ENCODE measurements at regions of chrX and their contacts with region 1.

Region 1: GRCh38 chrX:137051978-137052642 is 18.3 kb upstream of the GPR101 start:
- DNase-seq: peak; percentile 68
- ATAC-seq: peak; percentile 98
- H3K4me3 Mint-ChIP-seq: peak overlapping the region; percentile 87
- H3K27ac Mint-ChIP-seq: no peak overlapping the region
- H3K4me1 Mint-ChIP-seq: peaks cover 11% of the 10 kb centered on the region
- H3K27me3 Mint-ChIP-seq: peaks cover 16% of the 10 kb centered on the region
- CTCF ChIP-seq: no peak

Region 2: GRCh38 chrX:136608295-136609171 is 443.6 kb before region 1 on chrX:
- CTCF ChIA-PET with region 1: no interaction called
- POLR2A ChIA-PET with region 1: no interaction called
- intact Hi-C with region 1: loop called (anchors 1 kb)
- DNase-seq: peak; percentile 16
- ATAC-seq: peak; percentile 60
- H3K4me3 Mint-ChIP-seq: no peak overlapping the region
- H3K27ac Mint-ChIP-seq: no peak overlapping the region
- H3K4me1 Mint-ChIP-seq: peaks cover 5% of the 10 kb centered on the region
- H3K27me3 Mint-ChIP-seq: no peaks in the 10 kb centered on the region
- CTCF ChIP-seq: no peak

Region 3: GRCh38 chrX:136954930-136955329 is 97.2 kb before region 1 on chrX:
- CTCF ChIA-PET with region 1: interaction called, 5 read pairs
- POLR2A ChIA-PET with region 1: no interaction called
- intact Hi-C with region 1: loop called (anchors 1 kb)
- DNase-seq: no peak
- ATAC-seq: no peak
- H3K4me3 Mint-ChIP-seq: no peak overlapping the region
- H3K27ac Mint-ChIP-seq: no peak overlapping the region
- H3K4me1 Mint-ChIP-seq: no peaks in the 10 kb centered on the region
- H3K27me3 Mint-ChIP-seq: no peaks in the 10 kb centered on the region
- CTCF ChIP-seq: no peak

Region 4: DNA sequence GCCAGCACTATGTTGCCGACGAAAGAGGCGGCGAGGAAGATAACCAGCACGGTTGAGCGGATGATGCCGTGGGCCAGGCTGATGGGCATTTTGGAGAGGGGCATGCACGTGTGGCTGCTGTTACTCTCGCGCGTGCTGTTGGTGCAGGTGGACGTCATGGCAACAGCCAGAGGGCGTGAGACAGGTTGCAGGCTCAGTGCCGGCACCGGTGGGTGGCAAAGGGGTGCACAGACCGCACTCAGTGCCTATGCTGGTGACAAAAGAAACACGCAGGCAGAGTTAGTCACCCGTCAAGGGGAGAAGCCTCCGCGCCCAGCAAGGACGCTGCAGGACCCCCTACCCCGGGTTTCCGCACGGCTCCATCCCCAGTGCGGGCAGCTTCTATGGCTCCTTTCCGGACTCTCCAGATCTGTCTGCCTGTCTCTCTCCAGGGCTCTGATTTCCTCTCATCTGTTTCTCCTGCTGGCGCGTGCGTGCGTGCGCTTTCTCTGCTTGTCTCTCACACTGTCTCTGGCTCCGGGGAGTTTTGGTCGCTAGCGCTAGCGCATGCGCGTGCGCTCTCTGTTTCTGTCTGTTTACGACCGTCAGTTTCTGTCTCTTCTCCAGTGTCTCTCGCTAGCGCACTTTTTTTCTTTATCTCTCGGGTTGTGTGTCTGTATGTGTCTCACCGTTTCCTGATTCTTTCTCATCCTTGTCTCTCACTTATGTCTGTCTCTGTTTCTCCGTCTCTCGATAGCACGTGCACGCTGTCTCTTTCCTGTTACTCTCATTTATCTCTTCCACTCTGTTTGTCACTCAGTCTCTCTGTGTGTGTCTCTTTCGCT is 20.4 kb before region 1 on chrX:
- CTCF ChIA-PET with region 1: no interaction called
- POLR2A ChIA-PET with region 1: no interaction called
- intact Hi-C with region 1: loop called (anchors 1 kb)
- DNase-seq: peak; percentile 16
- ATAC-seq: peak; percentile 77
- H3K4me3 Mint-ChIP-seq: no peak overlapping the region
- H3K27ac Mint-ChIP-seq: no peak overlapping the region
- H3K4me1 Mint-ChIP-seq: peaks cover 12% of the 10 kb centered on the region
- H3K27me3 Mint-ChIP-seq: peaks cover 39% of the 10 kb centered on the region
- CTCF ChIP-seq: no peak

Measured in activated B cell treated with CpG ODN at 0.5 μM for 24 hours (primary cell).